SK-N-SH (cell line): ENCODE measurements at regions of chr10 and their contacts with region 1.

Region 1: GRCh38 chr10:29455095-29455494 is 166.2 kb downstream of the LYZL1 start:
- DNase-seq: no peak
- H3K4me3 ChIP-seq: no peak overlapping the region
- H3K27ac ChIP-seq: no peak overlapping the region
- H3K4me1 ChIP-seq: no peaks in the 10 kb centered on the region; a peak in 1 of 4 replicates
- H3K27me3 ChIP-seq: no peaks in the 10 kb centered on the region
- CTCF ChIP-seq: no peak
- EP300 ChIP-seq: no peak
- RAD21 ChIP-seq: no peak

Region 2: DNA sequence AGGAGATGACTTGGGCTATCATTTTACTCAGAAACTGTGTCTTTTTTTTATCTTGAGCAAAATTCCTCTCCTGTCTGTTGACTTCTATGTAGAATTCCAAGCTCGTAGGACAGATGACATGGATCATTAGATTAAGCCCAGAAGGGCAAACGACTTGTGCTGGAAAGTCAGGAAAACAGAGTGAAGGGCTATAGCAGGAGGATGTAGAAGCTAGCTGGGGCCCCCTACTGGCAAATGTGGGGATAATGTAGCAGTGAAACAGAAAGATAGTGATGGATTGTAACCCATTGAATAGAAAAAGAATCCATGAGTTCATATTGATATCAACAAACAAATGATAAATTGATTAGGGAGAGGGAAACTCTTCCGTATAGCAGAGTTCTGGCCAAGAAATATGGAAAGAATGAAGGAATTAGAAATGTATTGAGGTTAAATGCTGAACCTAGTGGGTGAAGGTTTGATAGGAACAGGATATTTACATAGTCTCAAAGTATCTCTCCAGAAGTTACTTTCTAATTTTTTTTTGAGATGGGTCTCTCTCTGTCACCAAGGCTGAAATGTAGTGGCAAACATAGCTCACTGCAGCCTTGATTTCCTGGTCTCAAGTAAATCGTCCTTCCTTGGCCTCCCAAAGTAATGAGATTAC is 62.6 kb before region 1 on chr10:
- CTCF ChIA-PET with region 1: interaction called, 10 read pairs
- POLR2A ChIA-PET with region 1: no interaction called
- DNase-seq: peak; percentile 75
- H3K4me3 ChIP-seq: no peak overlapping the region; a peak in 1 of 4 replicates
- H3K27ac ChIP-seq: no peak overlapping the region
- H3K4me1 ChIP-seq: no peaks in the 10 kb centered on the region; a peak in 1 of 4 replicates
- H3K27me3 ChIP-seq: peaks cover 23% of the 10 kb centered on the region; the same call in 1 of the 2 replicates
- CTCF ChIP-seq: peak; percentile 84
- EP300 ChIP-seq: no peak
- RAD21 ChIP-seq: peak; percentile 74

Region 3: GRCh38 chr10:29598851-29599311 is 143.8 kb after region 1 on chr10:
- CTCF ChIA-PET with region 1: no interaction called
- POLR2A ChIA-PET with region 1: no interaction called
- DNase-seq: no peak
- H3K4me3 ChIP-seq: no peak overlapping the region
- H3K27ac ChIP-seq: peak overlapping the region in 1 of 2 experiments; percentile 44; a peak in 1 of 4 replicates
- H3K4me1 ChIP-seq: peaks cover 2 to 33% of the 10 kb centered on the region in 2 experiments; a peak in 3 of 4 replicates
- H3K27me3 ChIP-seq: no peaks in the 10 kb centered on the region
- CTCF ChIP-seq: no peak
- EP300 ChIP-seq: no peak
- RAD21 ChIP-seq: no peak